ENCODE measurements at regions of chr9 and their contacts with region 1.

Region 1: DNA sequence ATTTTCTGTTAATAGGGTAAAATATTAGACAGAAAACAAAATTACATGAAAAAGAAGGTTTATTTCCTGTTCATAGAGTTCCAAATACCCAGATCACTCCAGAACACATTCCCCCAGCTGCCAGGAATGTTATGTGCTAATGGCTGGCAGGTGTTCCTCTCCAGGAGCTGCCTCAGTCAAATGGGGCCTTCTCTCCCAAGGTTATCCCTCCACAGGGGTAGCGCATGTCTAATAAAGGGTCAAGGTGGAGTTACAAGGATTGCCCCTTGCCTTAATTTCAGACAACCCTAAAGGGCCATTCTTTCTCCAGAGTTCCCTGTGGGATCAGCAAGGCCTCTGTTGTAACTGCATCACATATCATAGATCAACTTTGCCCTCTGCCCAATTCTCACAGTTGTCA is 148.6 kb upstream of the PLPPR1 start:
- DNase-seq: no peak
- ATAC-seq: no peak

Region 2: DNA sequence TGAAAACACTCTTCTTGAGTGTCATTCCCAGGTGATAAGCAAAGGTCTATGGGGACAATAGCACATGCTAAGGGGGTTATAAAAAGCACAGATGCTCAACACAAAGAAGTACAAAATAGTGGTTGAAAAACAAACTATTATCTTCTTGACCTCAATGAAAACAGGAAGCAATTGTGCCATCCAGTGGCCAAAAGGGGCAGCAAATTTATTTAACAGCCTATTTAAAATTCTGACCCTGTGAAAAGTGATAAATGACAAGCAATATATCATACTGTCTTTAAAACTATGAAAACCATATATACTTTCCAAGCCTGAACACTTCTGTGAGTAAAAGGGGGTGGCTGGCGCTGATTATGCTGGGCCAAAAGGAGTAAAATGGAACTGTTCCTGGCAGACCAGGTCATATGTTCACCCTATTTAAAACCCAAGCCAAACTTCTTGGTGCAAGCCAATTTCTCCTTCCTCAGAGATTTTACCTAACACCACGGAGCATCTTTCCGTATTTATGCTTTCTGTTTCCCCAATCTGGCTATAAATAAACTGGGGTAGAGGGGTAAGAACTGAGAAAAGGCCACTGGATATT is 556.8 kb before region 1 on chr9:
- intact Hi-C with region 1: loop called (anchors 5 kb)
- DNase-seq: no peak
- ATAC-seq: no peak

Region 3: GRCh38 chr9:100774326-100774725 is 105.6 kb before region 1 on chr9:
- intact Hi-C with region 1: no loop called
- DNase-seq: no peak
- ATAC-seq: no peak

Measured in sciatic nerve (tissue), 2 donors.